Common myeloid progenitor, CD34-positive (primary cell): ENCODE measurements at regions of chr2 and their contacts with region 1.

Region 1: GRCh38 chr2:181573140-181573736 is 83.7 kb downstream of the CERKL start:
- DNase-seq: peak; percentile 44 to 56 (median 44)
- H3K4me3 ChIP-seq: no peak overlapping the region
- H3K27ac ChIP-seq: no peak overlapping the region
- H3K4me1 ChIP-seq: peaks cover 3 to 17% (median 12%) of the 10 kb centered on the region in 4 experiments
- H3K27me3 ChIP-seq: no peaks in the 10 kb centered on the region

Region 2: GRCh38 chr2:181419129-181419855 is 153.9 kb before region 1 on chr2:
- CTCF ChIA-PET with region 1: no interaction called
- POLR2A ChIA-PET with region 1: no interaction called
- DNase-seq: peak in 2 of 3 donors; percentile 82 to 87
- H3K4me3 ChIP-seq: no peak overlapping the region
- H3K27ac ChIP-seq: peak overlapping the region; percentile 71 to 82
- H3K4me1 ChIP-seq: peaks cover 3 to 27% (median 11%) of the 10 kb centered on the region in 4 experiments
- H3K27me3 ChIP-seq: no peaks in the 10 kb centered on the region

Region 3: GRCh38 chr2:181586569-181587081 is 13.4 kb after region 1 on chr2:
- CTCF ChIA-PET with region 1: interaction called, 13 read pairs
- POLR2A ChIA-PET with region 1: no interaction called
- DNase-seq: peak; percentile 14 to 70 (median 58)
- H3K4me3 ChIP-seq: no peak overlapping the region
- H3K27ac ChIP-seq: no peak overlapping the region
- H3K4me1 ChIP-seq: peaks cover 3 to 13% (median 9%) of the 10 kb centered on the region in 4 experiments
- H3K27me3 ChIP-seq: no peaks in the 10 kb centered on the region

Region 4: DNA sequence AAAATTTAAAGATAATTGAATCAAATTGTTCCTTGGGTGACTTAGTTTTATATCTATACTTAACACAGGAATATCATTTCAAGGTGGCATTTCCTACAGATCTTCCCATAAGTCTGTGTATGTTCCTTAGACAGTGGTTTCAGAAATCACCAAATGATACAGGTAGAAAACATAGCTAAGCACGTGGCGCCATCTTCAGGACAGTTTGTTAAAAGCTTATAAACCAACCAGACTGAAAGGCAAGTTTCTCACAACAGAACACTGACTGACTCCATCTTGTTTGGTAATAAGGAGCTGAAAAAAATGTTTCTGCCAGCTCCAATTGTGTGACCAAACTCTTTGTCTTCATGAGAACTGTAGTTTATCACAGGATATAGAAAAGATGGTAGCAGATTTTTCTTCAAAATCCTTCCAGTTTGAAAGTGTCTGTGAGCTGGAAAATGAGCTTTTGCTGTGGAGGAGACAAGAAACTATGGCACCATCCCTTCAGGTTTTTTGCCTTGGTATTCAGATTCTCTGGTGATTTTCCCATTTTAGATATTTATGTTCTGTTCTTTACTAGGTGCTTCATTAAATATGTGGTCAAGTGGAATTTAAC is 141.9 kb after region 1 on chr2:
- CTCF ChIA-PET with region 1: interaction called, 96 read pairs
- POLR2A ChIA-PET with region 1: no interaction called
- DNase-seq: peak; percentile 80 to 88 (median 81)
- H3K4me3 ChIP-seq: no peak overlapping the region
- H3K27ac ChIP-seq: no peak overlapping the region
- H3K4me1 ChIP-seq: no peaks in the 10 kb centered on the region
- H3K27me3 ChIP-seq: no peaks in the 10 kb centered on the region